ENCODE measurements at regions of chr10 and their contacts with region 1.

Region 1: DNA sequence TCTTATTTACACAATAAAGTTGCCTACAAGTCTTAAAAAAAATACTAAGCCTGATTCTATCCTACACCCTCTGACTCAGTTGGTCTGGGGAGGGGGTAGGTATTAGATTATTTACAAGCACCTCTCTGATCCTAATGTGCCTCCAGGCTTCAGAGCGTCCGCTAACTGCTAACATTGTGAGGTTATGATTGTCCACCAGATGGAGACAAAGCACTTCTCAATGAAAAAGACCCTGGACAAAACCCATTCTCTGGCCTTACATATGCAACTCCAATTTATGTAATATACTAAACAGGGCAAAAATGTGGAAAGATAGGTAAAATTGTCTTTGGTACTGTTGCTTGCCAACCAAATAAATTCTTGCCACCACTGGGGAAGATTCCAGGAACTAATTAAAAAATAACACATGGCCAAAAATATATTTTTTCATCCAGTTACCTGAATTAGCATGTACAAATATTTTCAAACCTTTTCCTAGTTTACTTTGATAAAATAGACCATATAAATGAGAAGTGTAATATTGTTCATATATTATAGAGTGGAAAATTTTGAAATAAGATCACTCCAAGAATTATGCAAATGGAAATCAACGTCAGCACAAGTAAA is 92.4 kb downstream of the KIF20B start:
- DNase-seq: peak; percentile 81
- H3K4me3 Mint-ChIP-seq: no peak overlapping the region
- H3K27ac Mint-ChIP-seq: no peak overlapping the region
- H3K4me1 Mint-ChIP-seq: no peaks in the 10 kb centered on the region
- H3K27me3 Mint-ChIP-seq: no peaks in the 10 kb centered on the region
- CTCF ChIP-seq: peak; percentile 70

Region 2: DNA sequence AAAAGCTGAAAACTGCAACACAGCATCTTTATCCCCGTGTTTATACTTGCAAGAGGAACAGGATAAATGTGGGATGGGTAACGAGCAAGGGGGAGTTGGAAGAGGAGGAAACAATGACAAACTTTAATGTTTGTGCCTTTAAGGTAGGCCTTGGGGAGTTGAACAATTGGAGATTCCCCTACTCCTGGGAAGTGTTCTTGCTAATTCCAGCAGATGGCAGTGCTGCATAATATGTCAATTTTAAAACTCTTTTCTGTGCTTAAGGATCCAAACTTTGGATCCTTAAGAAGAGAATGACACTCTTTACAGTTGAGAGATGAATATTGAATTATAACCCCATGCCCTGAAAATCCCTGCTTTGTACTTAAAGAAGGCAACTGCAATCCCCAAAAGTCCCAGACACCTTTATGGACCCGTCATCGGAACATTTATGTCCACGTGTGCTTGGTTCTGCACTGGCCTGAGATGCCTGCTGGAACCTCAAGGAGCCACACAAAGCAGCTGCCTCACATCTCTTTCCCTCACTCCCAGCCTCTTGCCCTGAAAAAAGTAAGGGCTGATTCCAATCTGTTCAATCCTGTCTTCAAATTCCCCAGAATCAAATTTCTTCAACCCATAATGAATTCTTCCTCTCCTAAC is 367.4 kb before region 1 on chr10:
- CTCF ChIA-PET with region 1: interaction called, 3 read pairs
- POLR2A ChIA-PET with region 1: no interaction called
- intact Hi-C with region 1: loop called (anchors 2 kb)
- DNase-seq: peak; percentile 70
- H3K4me3 Mint-ChIP-seq: no peak overlapping the region
- H3K27ac Mint-ChIP-seq: no peak overlapping the region
- H3K4me1 Mint-ChIP-seq: peaks cover 26% of the 10 kb centered on the region
- H3K27me3 Mint-ChIP-seq: no peaks in the 10 kb centered on the region
- CTCF ChIP-seq: peak; percentile 74

Region 3: GRCh38 chr10:89889606-89890005 is 95.9 kb after region 1 on chr10:
- CTCF ChIA-PET with region 1: no interaction called
- POLR2A ChIA-PET with region 1: no interaction called
- intact Hi-C with region 1: no loop called
- DNase-seq: no peak
- H3K4me3 Mint-ChIP-seq: no peak overlapping the region
- H3K27ac Mint-ChIP-seq: no peak overlapping the region
- H3K4me1 Mint-ChIP-seq: peaks cover 6% of the 10 kb centered on the region
- H3K27me3 Mint-ChIP-seq: no peaks in the 10 kb centered on the region
- CTCF ChIP-seq: no peak

Region 4: GRCh38 chr10:89975771-89976170 is 182.0 kb after region 1 on chr10:
- CTCF ChIA-PET with region 1: no interaction called
- POLR2A ChIA-PET with region 1: no interaction called
- intact Hi-C with region 1: no loop called
- DNase-seq: no peak
- H3K4me3 Mint-ChIP-seq: no peak overlapping the region
- H3K27ac Mint-ChIP-seq: no peak overlapping the region
- H3K4me1 Mint-ChIP-seq: no peaks in the 10 kb centered on the region
- H3K27me3 Mint-ChIP-seq: no peaks in the 10 kb centered on the region
- CTCF ChIP-seq: no peak

Region 5: GRCh38 chr10:90138844-90139243 is 345.1 kb after region 1 on chr10:
- CTCF ChIA-PET with region 1: no interaction called
- POLR2A ChIA-PET with region 1: no interaction called
- intact Hi-C with region 1: loop called (anchors 2 kb)
- DNase-seq: peak; percentile 39
- H3K4me3 Mint-ChIP-seq: no peak overlapping the region
- H3K27ac Mint-ChIP-seq: no peak overlapping the region
- H3K4me1 Mint-ChIP-seq: peaks cover 4% of the 10 kb centered on the region
- H3K27me3 Mint-ChIP-seq: no peaks in the 10 kb centered on the region
- CTCF ChIP-seq: peak; percentile 42

Region 6: DNA sequence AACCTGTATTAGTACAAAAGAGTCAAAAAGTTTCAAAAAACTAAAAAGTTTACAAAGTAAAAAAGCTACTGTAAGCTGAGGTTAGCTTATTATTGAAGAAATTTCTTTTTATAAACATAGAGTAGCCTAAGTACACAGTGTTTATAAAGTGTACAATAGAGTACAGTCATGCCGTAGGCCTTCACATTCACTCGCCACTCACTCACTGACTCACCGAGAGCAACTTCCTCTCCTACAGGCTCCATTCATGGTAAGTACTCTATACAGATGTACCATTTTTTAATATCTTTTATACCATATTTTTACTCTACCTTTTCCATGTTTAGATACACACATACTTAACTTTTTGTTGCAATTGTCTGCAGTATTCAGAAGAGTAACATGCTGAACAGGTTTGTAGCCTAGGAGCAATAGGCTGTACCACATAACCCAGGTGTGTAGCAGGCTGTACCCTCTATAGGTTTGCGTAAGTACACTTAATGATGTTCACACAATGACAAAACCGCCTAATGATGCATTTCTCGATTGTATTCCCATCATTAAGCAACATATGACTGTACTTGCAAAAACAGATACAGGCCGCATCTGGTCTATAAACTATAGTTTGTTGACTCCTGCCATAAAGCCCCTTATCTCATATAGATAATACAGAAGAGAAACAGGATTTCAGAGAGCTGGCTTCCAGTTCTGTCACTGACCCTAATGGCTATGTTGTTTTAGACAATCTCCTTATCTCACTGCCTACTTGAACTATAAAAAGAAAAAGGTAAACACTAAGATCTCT is 625.3 kb after region 1 on chr10:
- CTCF ChIA-PET with region 1: no interaction called
- POLR2A ChIA-PET with region 1: no interaction called
- intact Hi-C with region 1: loop called (anchors 5 kb)
- DNase-seq: peak; percentile 87
- H3K4me3 Mint-ChIP-seq: no peak overlapping the region
- H3K27ac Mint-ChIP-seq: peak overlapping the region; percentile 85
- H3K4me1 Mint-ChIP-seq: peaks cover 20% of the 10 kb centered on the region
- H3K27me3 Mint-ChIP-seq: no peaks in the 10 kb centered on the region
- CTCF ChIP-seq: no peak

Region 7: DNA sequence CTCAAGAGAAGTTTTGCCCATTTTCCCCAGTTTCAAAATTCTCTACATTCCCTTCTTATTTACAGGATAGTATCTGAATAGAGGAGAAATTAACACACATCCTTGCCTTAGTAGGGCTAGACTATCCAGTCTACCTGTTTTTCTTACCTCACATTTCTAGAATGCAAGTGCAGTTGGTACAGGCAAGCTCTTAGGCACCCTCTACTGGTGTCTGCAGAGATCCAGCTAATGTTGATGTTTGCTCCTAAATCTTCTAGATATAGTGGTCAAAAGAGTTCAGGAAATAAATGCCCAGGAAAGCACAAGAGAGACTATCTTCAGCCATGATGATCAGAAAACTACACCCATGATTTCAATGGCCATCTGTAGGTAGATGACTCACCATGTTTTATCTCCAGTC is 858.8 kb after region 1 on chr10:
- CTCF ChIA-PET with region 1: interaction called, 3 read pairs
- POLR2A ChIA-PET with region 1: interaction called, 4 read pairs
- intact Hi-C with region 1: loop called (anchors 1 kb)
- DNase-seq: peak; percentile 49
- H3K4me3 Mint-ChIP-seq: no peak overlapping the region
- H3K27ac Mint-ChIP-seq: no peak overlapping the region
- H3K4me1 Mint-ChIP-seq: no peaks in the 10 kb centered on the region
- H3K27me3 Mint-ChIP-seq: no peaks in the 10 kb centered on the region
- CTCF ChIP-seq: peak; percentile 57

Region 8: DNA sequence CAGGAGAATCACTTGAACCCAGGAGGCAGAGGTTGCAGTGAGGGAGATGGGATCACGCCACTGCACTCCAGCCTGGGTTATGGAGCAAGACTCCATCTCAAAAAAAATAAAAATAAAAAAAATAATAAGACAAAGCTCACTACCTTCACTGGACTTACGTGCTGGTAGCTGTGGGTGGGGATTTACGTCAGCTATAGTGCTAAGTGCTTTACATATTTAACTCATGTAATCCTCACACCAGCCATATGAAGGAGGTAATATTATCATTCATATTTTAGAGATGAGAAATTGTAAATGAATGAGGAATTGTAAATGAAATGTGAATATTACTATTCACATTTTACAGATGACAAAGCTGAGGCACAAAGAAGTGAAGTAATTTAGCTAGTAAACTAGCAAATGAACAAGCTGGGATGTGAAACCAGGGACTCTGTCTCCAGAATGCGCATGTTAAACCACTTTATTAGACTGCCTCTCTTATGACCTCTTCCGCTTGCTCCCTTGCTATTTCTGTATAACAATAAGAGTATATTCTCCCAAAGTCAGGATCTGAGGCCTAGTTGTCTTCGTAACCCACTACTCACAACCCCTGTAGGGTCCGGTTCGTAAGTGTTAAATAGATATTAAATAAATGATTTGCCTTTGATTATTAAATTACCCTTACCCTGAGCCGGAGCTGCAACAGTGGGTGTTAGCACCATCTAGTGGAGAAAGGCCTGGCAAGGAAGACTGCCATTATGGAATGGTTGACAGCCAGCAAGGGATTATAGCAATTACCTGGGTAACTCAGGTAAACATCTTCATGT is 993.8 kb after region 1 on chr10:
- CTCF ChIA-PET with region 1: interaction called, 3 read pairs
- POLR2A ChIA-PET with region 1: no interaction called
- intact Hi-C with region 1: loop called (anchors 1 kb)
- DNase-seq: peak; percentile 59
- H3K4me3 Mint-ChIP-seq: no peak overlapping the region
- H3K27ac Mint-ChIP-seq: no peak overlapping the region
- H3K4me1 Mint-ChIP-seq: peaks cover 21% of the 10 kb centered on the region
- H3K27me3 Mint-ChIP-seq: no peaks in the 10 kb centered on the region
- CTCF ChIP-seq: peak; percentile 77